ENCODE measurements at regions of chr6 and their contacts with region 1.

Region 1: GRCh38 chr6:13336553-13336952 is 8.2 kb upstream of the TBC1D7 start:
- DNase-seq: peak; percentile 65 to 87 (median 74)
- ATAC-seq: peak; percentile 44 to 80 (median 75)
- H3K4me3 ChIP-seq: no peak overlapping the region
- H3K27ac ChIP-seq: peak overlapping the region in 1 of 12 donors; percentile 33
- H3K4me1 ChIP-seq: peaks cover 0 to 18% (median under 1%) of the 10 kb centered on the region in 12 donors
- H3K27me3 ChIP-seq: no peaks in the 10 kb centered on the region
- CTCF ChIP-seq: peak; percentile 78 to 96 (median 90)
- POLR2A ChIP-seq: no peak

Region 2: DNA sequence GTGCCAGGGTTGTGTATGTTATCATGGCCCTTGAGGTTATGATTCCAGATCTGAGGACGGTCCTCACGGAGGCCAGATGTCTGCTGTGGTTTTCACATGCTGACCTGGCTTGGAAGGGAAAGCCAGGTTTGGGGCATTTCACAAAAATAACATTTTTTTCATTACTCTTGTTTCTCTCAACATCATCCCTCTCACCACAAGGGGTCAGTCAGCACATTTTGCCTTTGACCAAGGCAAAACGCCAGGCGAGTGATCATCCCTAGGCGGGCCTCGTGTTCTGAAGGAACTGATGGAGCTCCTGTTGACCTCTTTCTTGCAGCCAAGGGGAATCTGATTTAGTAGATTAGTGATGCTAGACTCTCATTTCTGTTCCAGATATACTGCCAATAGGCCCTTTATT is 141.7 kb before region 1 on chr6:
- intact Hi-C with region 1: loop called in 3 of 10 experiments (anchors 5 to 10 kb)
- DNase-seq: peak in 3 of 5 donors; percentile 14 to 54 (median 40)
- ATAC-seq: peak in 1 of 4 donors; percentile 43
- H3K4me3 ChIP-seq: no peak overlapping the region
- H3K27ac ChIP-seq: no peak overlapping the region
- H3K4me1 ChIP-seq: peaks cover 0 to 8% (median 0%) of the 10 kb centered on the region in 12 donors
- H3K27me3 ChIP-seq: no peaks in the 10 kb centered on the region
- CTCF ChIP-seq: peak; percentile 21 to 60 (median 39)
- POLR2A ChIP-seq: no peak

Region 3: DNA sequence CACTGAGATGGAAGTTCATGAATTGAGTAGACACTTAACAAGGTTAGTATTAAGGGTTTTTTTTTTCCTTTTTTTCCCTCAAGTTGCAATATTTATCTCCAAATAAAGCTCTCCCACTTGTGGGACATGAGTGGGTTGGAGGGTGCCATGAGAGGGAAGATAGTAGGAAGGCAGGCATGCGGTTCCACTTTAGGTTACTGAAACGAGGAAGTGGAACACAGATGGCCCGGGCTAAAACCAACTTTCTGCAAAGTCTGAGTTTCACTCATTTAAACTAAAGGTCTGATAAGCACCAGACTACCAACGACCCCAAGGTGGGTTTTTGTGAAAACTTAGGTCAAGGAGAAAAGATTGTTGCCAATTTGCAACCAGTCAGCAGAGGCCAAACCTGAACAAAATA is 50.4 kb before region 1 on chr6:
- intact Hi-C with region 1: no loop called
- DNase-seq: no peak
- ATAC-seq: no peak
- H3K4me3 ChIP-seq: no peak overlapping the region
- H3K27ac ChIP-seq: no peak overlapping the region
- H3K4me1 ChIP-seq: peaks cover 0 to 9% (median 0%) of the 10 kb centered on the region in 12 donors
- H3K27me3 ChIP-seq: no peaks in the 10 kb centered on the region
- CTCF ChIP-seq: no peak
- POLR2A ChIP-seq: no peak

Region 4: DNA sequence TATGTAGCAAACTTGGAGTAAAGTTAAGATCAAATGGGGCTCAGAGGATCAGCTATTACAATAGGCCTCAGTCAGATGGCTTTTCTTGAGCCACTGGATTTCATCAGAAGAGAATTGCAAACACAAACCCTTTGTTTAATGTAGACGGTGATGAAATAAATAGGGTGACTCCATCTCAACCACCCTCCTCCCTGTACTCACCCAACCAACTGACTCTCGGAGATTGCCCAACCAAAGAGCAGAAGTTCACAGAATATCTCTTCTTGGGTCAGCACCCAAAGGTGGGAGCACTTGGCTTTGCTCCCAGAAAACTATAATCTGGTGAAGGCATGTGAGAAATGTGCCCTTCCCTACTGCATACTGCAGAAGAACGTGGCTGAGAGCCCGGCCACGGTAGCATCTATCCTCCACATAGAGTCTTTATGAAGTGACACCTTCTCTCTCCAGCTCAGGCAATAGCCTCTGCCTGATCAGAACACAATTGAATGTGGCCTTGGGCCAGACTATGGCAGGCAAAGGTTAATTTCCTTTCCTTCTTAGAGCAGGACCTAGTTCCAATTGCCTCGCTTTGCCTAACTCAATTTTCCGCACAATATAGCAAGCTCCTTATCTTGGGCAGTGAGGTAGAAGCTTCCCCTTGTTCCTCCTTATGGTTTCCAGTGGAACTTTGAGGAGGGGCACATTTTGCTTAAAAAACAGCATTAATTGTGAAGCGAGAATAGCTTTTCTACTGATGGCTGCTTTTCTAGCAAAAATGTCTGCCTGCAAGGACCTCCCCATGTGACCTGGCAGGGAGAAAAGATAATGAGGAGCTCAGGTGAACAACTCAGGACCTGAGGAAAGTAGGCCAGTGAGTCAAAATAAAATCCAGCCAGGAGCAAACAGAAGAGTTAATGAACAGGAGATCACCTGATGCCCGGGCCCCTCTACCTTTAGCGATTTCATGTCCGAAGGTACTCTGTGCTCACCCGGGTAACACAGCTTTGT is 71.4 kb after region 1 on chr6:
- intact Hi-C with region 1: loop called in 1 of 10 experiments (anchors 5 kb)
- DNase-seq: no peak
- ATAC-seq: peak in 3 of 4 donors; percentile 36 to 63 (median 38)
- H3K4me3 ChIP-seq: no peak overlapping the region
- H3K27ac ChIP-seq: peak overlapping the region; percentile 42 to 93 (median 78)
- H3K4me1 ChIP-seq: peaks cover 22 to 96% (median 84%) of the 10 kb centered on the region in 12 donors
- H3K27me3 ChIP-seq: no peaks in the 10 kb centered on the region
- CTCF ChIP-seq: no peak
- POLR2A ChIP-seq: peak in 1 of 2 donors; percentile 17

Region 5: DNA sequence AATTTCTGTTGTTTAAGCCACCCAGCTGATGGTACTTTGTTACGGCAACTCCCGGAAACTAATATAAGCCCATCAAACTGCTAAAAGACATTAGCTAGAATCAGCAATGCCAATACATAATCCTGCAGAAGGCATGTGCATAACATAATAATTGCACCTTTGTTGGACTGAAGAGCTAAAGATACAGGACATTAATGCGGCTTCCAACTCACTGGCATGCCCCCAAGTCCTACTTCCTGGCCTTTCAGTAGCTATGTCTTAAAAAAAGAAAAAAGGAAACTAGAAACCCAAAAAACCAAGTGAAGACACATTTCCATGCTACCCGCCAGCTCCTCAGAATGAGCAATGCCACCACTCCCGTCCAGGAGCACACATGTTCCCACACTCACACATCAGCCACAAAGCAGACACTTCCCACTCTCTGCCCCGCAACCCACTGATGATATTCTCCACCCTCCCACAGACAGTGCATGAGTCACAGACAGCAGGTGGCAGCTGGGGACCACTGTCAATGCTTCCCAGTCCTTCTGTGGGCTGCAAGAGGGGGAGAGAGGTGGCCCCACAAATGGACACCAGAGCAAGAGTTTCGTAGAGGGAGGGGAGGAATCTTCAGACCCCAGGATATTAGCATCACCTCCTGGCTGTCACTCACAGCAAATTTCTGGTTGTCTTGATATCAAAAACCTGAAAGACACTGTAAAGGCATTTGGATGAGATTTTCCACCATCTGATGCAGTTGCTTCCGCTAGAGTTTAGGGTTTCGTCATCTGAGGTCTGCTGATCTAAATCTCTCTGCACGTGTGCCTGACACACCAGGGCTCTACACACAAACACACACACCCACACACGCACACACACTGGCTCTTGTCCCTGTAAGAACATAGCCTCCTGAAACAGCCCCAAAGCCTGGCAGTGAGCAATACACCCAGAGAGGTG is 118.0 kb after region 1 on chr6:
- intact Hi-C with region 1: loop called in 1 of 10 experiments (anchors 10 kb)
- DNase-seq: peak in 4 of 5 donors; percentile 45 to 57 (median 49)
- ATAC-seq: peak; percentile 56 to 80 (median 70)
- H3K4me3 ChIP-seq: no peak overlapping the region
- H3K27ac ChIP-seq: peak overlapping the region; percentile 22 to 75 (median 48)
- H3K4me1 ChIP-seq: peaks cover 0 to 83% (median 48%) of the 10 kb centered on the region in 12 donors
- H3K27me3 ChIP-seq: no peaks in the 10 kb centered on the region
- CTCF ChIP-seq: peak in 8 of 12 donors; percentile 21 to 56 (median 29)
- POLR2A ChIP-seq: no peak

Region 6: GRCh38 chr6:13538084-13538483 is 201.5 kb after region 1 on chr6:
- intact Hi-C with region 1: loop called (anchors 1 to 5 kb)
- DNase-seq: no peak
- ATAC-seq: peak; percentile 55 to 78 (median 76)
- H3K4me3 ChIP-seq: no peak overlapping the region
- H3K27ac ChIP-seq: peak overlapping the region in 10 of 12 donors; percentile 8 to 73 (median 37)
- H3K4me1 ChIP-seq: peaks cover 0 to 24% (median 13%) of the 10 kb centered on the region in 12 donors
- H3K27me3 ChIP-seq: no peaks in the 10 kb centered on the region
- CTCF ChIP-seq: peak; percentile 38 to 73 (median 60)
- POLR2A ChIP-seq: no peak

Region 7: DNA sequence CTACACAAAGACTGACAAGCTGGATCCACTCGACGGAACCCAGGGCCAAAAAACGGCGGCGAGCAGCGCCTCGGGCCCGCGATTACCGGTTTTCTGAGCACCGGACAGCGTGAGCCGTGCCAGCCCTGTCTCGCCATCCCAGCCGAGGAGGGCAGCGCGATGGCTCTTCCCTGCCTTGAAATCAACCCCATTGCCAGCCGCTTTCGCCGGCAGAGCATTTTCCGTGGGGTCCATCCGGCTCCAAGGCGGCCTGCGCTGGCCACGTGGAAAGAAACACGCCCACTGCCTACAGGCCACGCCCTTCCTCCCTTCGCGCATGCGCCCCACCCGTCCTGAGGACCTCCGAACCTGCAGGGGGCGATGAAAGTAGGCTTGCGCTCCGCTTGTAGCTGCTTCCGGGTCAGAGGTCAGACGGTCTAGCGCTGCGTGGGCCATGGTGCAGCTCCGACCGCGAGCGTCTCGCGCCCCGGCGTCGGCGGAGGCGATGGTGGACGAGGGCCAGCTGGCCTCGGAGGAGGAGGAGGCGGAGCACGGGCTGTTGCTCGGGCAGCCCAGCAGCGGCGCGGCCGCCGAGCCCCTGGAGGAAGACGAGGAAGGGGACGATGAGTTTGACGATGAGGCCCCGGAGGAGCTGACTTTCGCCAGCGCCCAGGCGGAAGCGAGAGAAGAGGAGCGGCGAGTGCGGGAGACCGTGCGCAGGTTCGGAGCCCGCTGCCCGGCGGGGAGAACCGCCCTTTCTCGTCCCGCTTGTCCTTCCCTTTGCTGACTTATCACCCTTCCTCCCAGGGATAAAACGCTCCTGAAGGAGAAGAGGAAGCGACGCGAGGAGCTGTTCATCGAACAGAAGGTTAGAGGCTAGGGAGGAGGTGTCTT is 278.6 kb after region 1 on chr6 and contains the start of gene NOL7:
- intact Hi-C with region 1: loop called in 2 of 10 experiments (anchors 10 kb)
- DNase-seq: peak; percentile 98 to 99 (median 98)
- ATAC-seq: peak; percentile 96 to 98 (median 96)
- H3K4me3 ChIP-seq: peak within 1 kb of the TSS; percentile 66 to 96 (median 83)
- H3K27ac ChIP-seq: peak within 1 kb of the TSS; percentile 75 to 94 (median 89)
- H3K4me1 ChIP-seq: peaks cover 3 to 48% (median 27%) of the 10 kb centered on the region in 12 donors
- H3K27me3 ChIP-seq: no peaks in the 10 kb centered on the region
- CTCF ChIP-seq: peak; percentile 83 to 99 (median 92)
- POLR2A ChIP-seq: peak in 1 of 2 donors; percentile 72
- total RNA-seq, gene NOL7: 38.6 to 118 (median 47.8) TPM

Measured in heart left ventricle (tissue), 16 donors.